ENCODE measurements at regions of chr3 and their contacts with region 1.

Region 1: GRCh38 chr3:150850191-150850590 is 55.0 kb downstream of the MINDY4B start:
- DNase-seq: no peak
- H3K4me3 ChIP-seq: no peak overlapping the region
- H3K27ac ChIP-seq: no peak overlapping the region
- H3K4me1 ChIP-seq: no peaks in the 10 kb centered on the region
- H3K27me3 ChIP-seq: no peaks in the 10 kb centered on the region
- CTCF ChIP-seq: no peak

Region 2: GRCh38 chr3:150227839-150228238 is 622.4 kb before region 1 on chr3:
- CTCF ChIA-PET with region 1: no interaction called
- POLR2A ChIA-PET with region 1: no interaction called
- intact Hi-C with region 1: loop called (anchors 10 kb)
- DNase-seq: peak in 1 of 2 experiments; percentile 65
- H3K4me3 ChIP-seq: no peak overlapping the region
- H3K27ac ChIP-seq: no peak overlapping the region
- H3K4me1 ChIP-seq: no peaks in the 10 kb centered on the region
- H3K27me3 ChIP-seq: no peaks in the 10 kb centered on the region
- CTCF ChIP-seq: peak; percentile 82